ENCODE measurements at regions of chr17 and their contacts with region 1.

Region 1: DNA sequence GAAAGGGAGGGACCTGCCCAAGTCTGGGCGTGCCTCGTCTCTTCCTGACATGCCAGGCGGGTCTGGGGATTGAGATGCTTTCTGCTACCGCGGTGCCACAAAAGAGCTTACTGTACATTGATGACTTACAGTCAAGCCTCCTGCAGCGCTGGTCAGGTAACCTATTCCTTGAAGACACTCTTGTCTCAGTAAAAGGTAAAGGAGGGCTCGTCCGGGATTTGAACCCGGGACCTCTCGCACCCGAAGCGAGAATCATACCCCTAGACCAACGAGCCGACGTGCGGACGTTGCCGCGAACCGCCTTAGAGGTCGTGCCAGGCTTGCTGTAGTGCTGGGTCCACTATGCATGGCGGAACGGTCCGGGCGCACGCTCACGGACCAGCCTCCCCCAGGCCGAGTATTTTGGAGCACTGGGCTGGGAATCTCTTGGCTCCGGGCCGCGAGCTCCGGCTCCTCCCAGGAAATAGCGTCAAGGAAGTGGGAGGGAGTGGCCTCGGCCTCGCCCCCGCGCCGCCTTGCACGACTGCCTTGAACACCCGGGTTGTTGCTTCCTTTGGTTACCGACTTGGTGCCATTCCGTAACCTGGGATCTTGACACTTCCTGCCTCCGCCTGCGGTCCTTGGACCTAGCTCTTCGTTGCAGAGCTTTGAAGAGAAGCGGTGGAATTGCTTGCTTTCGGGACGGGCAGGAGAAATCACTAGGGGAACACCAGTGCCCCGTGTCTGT is 12.4 kb upstream of the AURKB start:
- DNase-seq: peak; percentile 73 to 92
- H3K4me3 ChIP-seq: peak overlapping the region; percentile 80
- H3K27ac ChIP-seq: peak overlapping the region; percentile 87
- H3K4me1 ChIP-seq: peaks cover 11% of the 10 kb centered on the region
- H3K27me3 ChIP-seq: no peaks in the 10 kb centered on the region
- CTCF ChIP-seq: no peak

Region 2: GRCh38 chr17:8091033-8091687 is 131.6 kb before region 1 on chr17:
- CTCF ChIA-PET with region 1: no interaction called
- POLR2A ChIA-PET with region 1: no interaction called
- intact Hi-C with region 1: no loop called
- DNase-seq: no peak
- H3K4me3 ChIP-seq: no peak overlapping the region
- H3K27ac ChIP-seq: no peak overlapping the region
- H3K4me1 ChIP-seq: no peaks in the 10 kb centered on the region
- H3K27me3 ChIP-seq: no peaks in the 10 kb centered on the region; the same call in 1 of the 2 replicates
- CTCF ChIP-seq: no peak

Region 3: GRCh38 chr17:8138672-8139371 is 84.0 kb before region 1 on chr17:
- CTCF ChIA-PET with region 1: no interaction called
- POLR2A ChIA-PET with region 1: no interaction called
- intact Hi-C with region 1: loop called (anchors 5 kb)
- DNase-seq: peak; percentile 92 to 99
- H3K4me3 ChIP-seq: peak overlapping the region; percentile 78
- H3K27ac ChIP-seq: peak overlapping the region; percentile 69
- H3K4me1 ChIP-seq: peaks cover 14% of the 10 kb centered on the region
- H3K27me3 ChIP-seq: no peaks in the 10 kb centered on the region
- CTCF ChIP-seq: peak; percentile 78

Region 4: GRCh38 chr17:8189711-8190477 is 32.9 kb before region 1 on chr17 and contains the start of gene BORCS6:
- CTCF ChIA-PET with region 1: interaction called, 6 read pairs
- POLR2A ChIA-PET with region 1: interaction called, 7 read pairs
- intact Hi-C with region 1: loop called (anchors 1 kb)
- DNase-seq: peak; percentile 90 to 96
- H3K4me3 ChIP-seq: peak within 1 kb of the TSS; percentile 86
- H3K27ac ChIP-seq: no peak within 1 kb of the TSS
- H3K4me1 ChIP-seq: peaks cover 12% of the 10 kb centered on the region
- H3K27me3 ChIP-seq: no peaks in the 10 kb centered on the region
- CTCF ChIP-seq: no peak
- total RNA-seq, gene BORCS6: 6.4 and 8.0 TPM in 2 replicates

Region 5: DNA sequence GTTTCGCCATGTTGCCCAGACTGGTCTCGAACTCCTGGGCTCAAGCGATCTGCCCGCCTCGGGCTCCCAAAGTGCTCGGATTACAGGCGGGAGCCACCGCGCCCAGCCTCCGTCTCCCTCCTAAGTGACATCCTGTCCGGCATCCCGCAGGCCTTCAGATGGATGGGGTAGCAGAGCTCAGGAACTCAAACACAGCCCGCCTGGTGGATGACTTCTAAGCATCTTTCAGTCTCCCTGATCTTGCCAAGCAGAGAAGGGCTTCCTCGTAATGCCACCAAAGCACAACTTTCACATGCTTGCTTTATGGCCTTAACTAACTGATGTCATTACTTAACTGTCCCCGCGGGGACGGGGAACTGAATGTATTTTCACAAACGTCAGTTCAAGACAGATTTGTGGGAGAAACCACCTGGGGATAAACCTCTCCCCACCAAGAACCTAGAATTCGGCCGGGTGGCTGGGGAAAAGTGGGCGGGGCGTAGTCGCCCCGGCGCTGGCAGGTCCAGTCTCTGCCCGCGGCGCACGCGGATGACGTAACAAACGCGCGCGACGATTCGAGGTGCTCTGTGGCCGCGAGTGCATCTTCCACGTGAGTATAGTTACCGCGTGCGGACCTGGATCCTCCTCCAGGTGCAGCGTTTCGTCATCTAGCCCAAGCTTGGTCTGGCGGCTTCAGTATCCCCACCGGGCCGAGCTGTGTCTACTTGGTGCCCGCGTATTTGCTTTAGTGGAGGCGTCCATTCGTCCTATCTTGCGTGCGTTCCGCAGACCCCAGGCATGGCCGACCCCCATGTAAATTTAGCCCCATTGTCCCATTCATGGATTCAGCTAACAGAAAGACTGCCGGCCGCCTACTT is 26.2 kb after region 1 on chr17 and contains the start of gene PFAS:
- CTCF ChIA-PET with region 1: interaction called, 3 read pairs
- POLR2A ChIA-PET with region 1: interaction called, 13 read pairs
- intact Hi-C with region 1: loop called (anchors 1 kb)
- DNase-seq: peak; percentile 83 to 96
- H3K4me3 ChIP-seq: peak within 1 kb of the TSS; percentile 99
- H3K27ac ChIP-seq: peak within 1 kb of the TSS; percentile 93
- H3K4me1 ChIP-seq: peaks cover 8% of the 10 kb centered on the region; the same call in 1 of the 2 replicates
- H3K27me3 ChIP-seq: no peaks in the 10 kb centered on the region
- CTCF ChIP-seq: no peak
- total RNA-seq, gene PFAS: 54.5 and 68.2 TPM in 2 replicates

Region 6: GRCh38 chr17:8268550-8269298 is 45.9 kb after region 1 on chr17:
- CTCF ChIA-PET with region 1: no interaction called
- POLR2A ChIA-PET with region 1: no interaction called
- intact Hi-C with region 1: no loop called
- DNase-seq: no peak
- H3K4me3 ChIP-seq: no peak overlapping the region
- H3K27ac ChIP-seq: no peak overlapping the region
- H3K4me1 ChIP-seq: no peaks in the 10 kb centered on the region
- H3K27me3 ChIP-seq: no peaks in the 10 kb centered on the region
- CTCF ChIP-seq: no peak

Region 7: GRCh38 chr17:8294814-8295316 is 72.1 kb after region 1 on chr17:
- CTCF ChIA-PET with region 1: interaction called, 4 read pairs
- POLR2A ChIA-PET with region 1: interaction called, 7 read pairs
- intact Hi-C with region 1: loop called (anchors 2 kb)
- DNase-seq: no peak
- H3K4me3 ChIP-seq: peak overlapping the region; percentile 66; the same call in 1 of the 2 replicates
- H3K27ac ChIP-seq: no peak overlapping the region
- H3K4me1 ChIP-seq: no peaks in the 10 kb centered on the region; the same call in 1 of the 2 replicates
- H3K27me3 ChIP-seq: no peaks in the 10 kb centered on the region
- CTCF ChIP-seq: no peak

Region 8: GRCh38 chr17:8499614-8500013 is 276.8 kb after region 1 on chr17:
- CTCF ChIA-PET with region 1: no interaction called
- POLR2A ChIA-PET with region 1: no interaction called
- intact Hi-C with region 1: no loop called
- DNase-seq: no peak
- H3K4me3 ChIP-seq: no peak overlapping the region
- H3K27ac ChIP-seq: no peak overlapping the region
- H3K4me1 ChIP-seq: no peaks in the 10 kb centered on the region
- H3K27me3 ChIP-seq: peaks cover 5% of the 10 kb centered on the region; the same call in 1 of the 2 replicates
- CTCF ChIP-seq: no peak

Region 9: GRCh38 chr17:9183306-9183705 is 960.5 kb after region 1 on chr17:
- CTCF ChIA-PET with region 1: interaction called, 11 read pairs
- POLR2A ChIA-PET with region 1: no interaction called
- intact Hi-C with region 1: no loop called
- DNase-seq: no peak
- H3K4me3 ChIP-seq: no peak overlapping the region
- H3K27ac ChIP-seq: no peak overlapping the region
- H3K4me1 ChIP-seq: no peaks in the 10 kb centered on the region
- H3K27me3 ChIP-seq: no peaks in the 10 kb centered on the region
- CTCF ChIP-seq: no peak